Right ventricle myocardium inferior (tissue), 1 donor: ENCODE measurements at regions of chr19 and their contacts with region 1.

Region 1: GRCh38 chr19:43463381-43464136 is 1.8 kb downstream of the LYPD3 start:
- DNase-seq: peak; percentile 99
- ATAC-seq: peak; percentile 95

Region 2: DNA sequence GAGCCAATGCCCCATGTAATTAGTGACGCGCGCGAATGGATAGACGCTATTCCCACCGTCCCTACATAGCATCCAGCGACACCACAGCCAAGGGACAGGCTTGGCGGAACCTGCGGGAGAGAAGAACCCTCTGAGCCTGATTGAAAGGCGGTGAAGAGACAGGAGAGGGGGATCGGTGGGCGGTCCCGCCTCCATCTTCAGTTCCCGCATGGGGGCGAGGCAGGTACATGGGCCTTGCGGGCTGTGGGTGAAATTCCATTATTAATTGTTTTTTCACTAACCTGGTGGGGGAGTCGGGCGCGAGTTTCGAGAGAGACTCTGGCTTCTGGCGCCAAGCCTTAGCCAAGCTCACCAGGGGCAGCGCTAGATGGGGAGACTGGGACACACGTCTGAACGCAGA is 57.3 kb before region 1 on chr19:
- intact Hi-C with region 1: no loop called
- DNase-seq: no peak
- ATAC-seq: no peak

Region 3: GRCh38 chr19:43482193-43482592 is 18.6 kb after region 1 on chr19:
- intact Hi-C with region 1: no loop called
- DNase-seq: no peak
- ATAC-seq: no peak

Region 4: GRCh38 chr19:43503501-43504425 is 40.2 kb after region 1 on chr19:
- intact Hi-C with region 1: loop called (anchors 2 kb)
- DNase-seq: peak; percentile 98
- ATAC-seq: peak; percentile 99

Region 5: GRCh38 chr19:43526884-43527859 is 63.6 kb after region 1 on chr19 and contains the start of gene ETHE1:
- intact Hi-C with region 1: loop called (anchors 5 kb)
- DNase-seq: peak; percentile 91
- ATAC-seq: peak; percentile 95
- total RNA-seq, gene ETHE1: 15.2 TPM

Region 6: DNA sequence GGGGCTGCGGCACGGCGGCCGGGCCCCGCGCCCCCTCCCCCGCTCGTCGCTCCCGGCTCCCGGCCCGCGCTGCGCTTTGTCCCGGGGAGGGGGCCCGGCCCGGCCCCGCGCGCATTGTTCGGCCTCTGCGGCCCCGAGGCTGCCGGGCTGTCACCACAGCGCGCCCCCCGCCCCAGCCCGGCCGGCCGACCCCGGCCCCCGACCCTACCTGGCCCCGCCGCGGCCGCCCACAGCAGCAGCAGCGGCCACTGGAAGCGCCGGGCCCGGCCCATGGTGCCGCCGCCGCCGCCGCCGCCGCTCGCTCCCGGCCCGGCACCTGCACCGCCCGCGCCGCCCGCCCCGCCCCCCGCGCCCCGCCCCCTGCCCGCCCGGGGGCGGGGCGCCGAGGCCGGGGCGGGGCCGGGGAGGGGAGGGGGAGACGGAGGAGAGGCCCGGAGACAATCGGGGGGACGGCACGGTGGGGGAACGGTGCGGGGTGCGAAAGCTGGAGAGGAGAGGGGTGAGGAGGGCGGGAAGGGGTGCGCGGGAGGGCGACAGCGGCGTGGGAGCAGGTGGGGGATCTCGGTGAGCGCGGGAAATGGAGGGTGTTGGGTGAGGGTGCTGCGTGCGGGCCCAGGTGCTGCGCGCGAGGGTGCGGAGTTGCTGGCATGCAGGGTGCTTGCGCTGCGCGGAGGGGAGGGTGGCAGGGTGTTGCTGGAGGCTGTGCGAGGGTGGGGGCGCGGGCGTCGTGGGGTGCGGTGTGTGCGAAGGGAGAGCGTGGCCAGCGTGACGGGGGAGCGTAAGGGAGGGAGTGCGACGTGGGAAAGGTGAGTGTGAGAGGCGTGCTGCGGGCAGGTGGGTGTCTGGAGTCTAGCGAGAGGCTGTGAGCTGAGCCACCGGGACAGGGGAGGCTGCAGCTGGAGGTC is 176.2 kb after region 1 on chr19 and contains the start of gene CADM4:
- intact Hi-C with region 1: no loop called
- DNase-seq: no peak
- ATAC-seq: peak; percentile 52
- total RNA-seq, gene CADM4: 9.7 TPM

Region 7: DNA sequence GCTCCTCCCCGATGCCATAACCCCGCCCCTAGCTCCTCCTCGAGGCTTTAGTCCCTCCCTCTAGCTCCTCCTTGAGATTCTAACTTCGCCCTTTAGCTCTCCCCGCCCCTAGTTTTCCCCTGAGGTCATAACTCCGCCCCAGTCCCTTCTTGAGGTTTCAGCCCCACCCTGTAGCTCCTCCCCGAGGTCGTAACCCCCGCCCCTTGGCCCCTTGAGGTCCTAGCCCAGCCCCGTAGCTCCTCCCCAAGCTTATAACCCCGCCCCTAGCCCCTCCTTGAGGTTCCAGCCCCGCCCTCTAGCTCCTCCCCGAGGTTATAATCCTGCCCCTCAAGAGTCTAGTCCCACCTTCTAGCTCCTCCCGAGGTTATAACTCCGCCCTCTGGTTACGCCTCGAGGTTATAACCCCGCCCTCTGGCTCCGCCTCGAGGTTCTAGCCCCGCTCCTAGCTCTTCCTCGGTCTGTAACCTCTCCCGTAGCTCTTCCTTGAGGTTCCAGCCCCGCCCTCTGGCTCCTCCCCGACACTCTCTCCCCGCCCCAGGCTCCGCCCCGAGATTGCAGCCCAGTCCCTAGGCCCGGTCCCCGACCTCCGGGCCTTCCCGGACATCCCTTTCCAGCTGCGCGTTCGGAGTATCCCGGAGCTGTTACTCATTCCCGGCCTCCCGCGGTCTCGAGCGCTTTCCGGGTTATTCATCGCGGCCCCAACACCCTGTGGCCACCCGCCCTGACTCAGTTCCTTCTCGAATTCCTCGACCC is 205.0 kb after region 1 on chr19:
- intact Hi-C with region 1: no loop called
- DNase-seq: peak; percentile 99
- ATAC-seq: peak; percentile 94